AG04450 (cell line): ENCODE measurements at regions of chr11 and their contacts with region 1.

Region 1: DNA sequence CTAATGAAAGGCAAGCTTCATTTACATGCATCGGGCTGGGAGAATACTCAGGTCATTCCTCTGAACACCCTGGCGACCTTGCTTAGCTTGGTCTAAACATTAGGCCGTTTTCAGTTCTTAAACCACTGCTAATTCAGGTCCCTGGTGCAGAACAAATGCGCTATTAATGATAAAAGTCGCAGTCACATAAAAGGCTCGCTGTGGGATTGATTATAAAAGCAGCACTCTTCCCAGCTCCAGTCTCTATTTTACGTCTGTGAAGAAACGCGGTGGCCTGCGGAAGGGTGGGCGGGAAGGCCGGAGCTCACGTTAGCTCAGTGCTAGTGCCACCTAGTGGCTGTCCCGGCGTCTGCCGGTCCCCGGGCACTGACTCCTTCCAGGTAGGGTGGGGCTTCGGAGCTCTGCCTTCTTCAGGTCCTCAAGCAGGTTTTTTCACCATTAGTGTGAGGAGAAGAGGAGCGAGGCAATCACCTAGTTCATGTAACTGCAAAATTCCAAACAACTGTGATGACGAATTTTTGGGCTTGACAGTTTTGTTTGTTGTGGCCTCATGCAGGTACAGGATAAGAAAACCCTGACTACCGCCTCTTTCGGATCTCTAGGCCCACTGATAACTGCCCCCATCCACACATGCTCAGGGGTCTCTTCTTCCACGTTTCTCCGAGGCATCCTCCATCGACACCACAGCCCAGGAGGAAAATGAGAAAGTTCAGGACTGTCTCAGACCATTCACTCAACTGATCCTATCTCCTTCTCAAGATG is 66.5 kb upstream of the CLMP start:
- DNase-seq: no peak
- H3K4me3 ChIP-seq: peak overlapping the region; percentile 20
- H3K27ac ChIP-seq: no peak overlapping the region
- H3K27me3 ChIP-seq: peaks cover 9% of the 10 kb centered on the region
- CTCF ChIP-seq: peak; percentile 97

Region 2: DNA sequence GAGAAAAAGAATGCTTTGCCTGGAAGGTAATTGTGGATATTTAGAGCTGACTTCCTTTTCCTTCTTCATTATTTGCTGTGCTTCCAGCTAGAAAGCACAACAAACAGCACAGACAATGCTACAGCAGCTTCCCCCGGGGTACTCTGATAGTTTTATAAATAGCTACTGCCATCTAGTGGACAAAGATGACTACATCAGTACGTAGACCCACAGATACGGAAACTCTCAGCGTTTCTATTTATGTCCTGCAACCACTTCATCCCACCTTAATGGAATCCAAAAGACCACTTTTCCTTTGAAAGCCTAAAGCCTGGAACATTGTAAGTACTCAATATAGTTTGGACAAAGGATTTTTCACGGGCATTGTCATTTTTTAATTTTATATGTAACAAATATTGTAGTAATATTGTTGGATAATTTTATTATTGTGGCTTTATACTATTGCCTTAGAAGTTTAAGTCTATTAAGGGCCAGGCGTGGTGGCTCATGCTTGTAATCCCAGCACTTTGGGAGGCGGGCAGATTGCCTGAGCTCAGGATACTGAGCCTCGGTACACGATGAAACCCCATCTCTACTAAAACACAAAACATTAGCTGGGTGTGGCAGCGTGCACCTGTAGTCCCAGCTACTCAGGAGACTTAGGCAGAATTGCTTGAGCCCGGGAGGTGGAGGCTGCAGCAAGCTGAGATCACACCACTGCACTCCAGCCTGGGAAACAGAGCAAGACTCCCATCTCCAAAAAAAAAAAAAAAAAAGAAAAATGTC is 207.0 kb before region 1 on chr11:
- CTCF ChIA-PET with region 1: interaction called, 24 read pairs
- POLR2A ChIA-PET with region 1: interaction called, 3 read pairs
- DNase-seq: peak; percentile 39
- H3K4me3 ChIP-seq: no peak overlapping the region
- H3K27ac ChIP-seq: no peak overlapping the region
- H3K27me3 ChIP-seq: no peaks in the 10 kb centered on the region
- CTCF ChIP-seq: peak; percentile 74

Region 3: DNA sequence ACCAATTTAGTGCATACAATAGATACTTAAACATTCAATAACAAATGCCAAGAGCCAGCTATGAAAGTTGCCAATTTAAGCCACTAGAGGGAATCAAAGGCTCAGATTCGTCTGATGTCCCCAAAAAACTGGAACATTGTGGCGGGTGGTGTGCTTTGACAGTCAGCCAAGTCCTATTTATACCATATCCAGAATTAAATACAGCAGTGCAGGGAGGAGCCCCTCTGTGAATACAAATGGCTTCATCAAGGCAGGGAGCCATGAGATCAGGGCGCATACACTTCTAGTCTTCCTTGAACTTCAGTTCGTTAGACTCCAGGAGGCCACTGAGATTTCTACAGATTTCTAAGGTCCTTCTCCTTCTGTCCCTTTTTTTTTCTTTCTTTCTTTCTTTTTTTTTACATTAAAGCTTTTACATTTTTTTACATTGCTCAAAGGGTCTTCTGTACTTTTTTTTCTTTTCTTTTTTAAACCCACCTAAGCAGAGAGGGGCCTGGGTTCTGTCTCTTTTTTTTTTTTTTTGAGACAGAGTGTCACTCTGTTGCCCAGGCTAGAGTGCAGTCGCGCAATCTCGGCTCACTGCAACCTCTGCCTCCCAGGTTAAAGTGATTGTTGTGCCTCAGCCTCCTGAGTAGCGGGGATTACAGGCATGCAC is 158.1 kb before region 1 on chr11:
- CTCF ChIA-PET with region 1: interaction called, 134 read pairs
- POLR2A ChIA-PET with region 1: no interaction called
- DNase-seq: peak; percentile 34
- H3K4me3 ChIP-seq: no peak overlapping the region
- H3K27ac ChIP-seq: no peak overlapping the region
- H3K27me3 ChIP-seq: no peaks in the 10 kb centered on the region
- CTCF ChIP-seq: peak; percentile 64

Region 4: GRCh38 chr11:123137431-123138224 is 123.9 kb before region 1 on chr11:
- CTCF ChIA-PET with region 1: interaction called, 11 read pairs
- POLR2A ChIA-PET with region 1: no interaction called
- DNase-seq: no peak
- H3K4me3 ChIP-seq: no peak overlapping the region; the same call in 1 of the 2 replicates
- H3K27ac ChIP-seq: peak overlapping the region; percentile 90
- H3K27me3 ChIP-seq: no peaks in the 10 kb centered on the region
- CTCF ChIP-seq: peak; percentile 33

Region 5: GRCh38 chr11:123235117-123235655 is 26.3 kb before region 1 on chr11:
- CTCF ChIA-PET with region 1: interaction called, 11 read pairs
- POLR2A ChIA-PET with region 1: no interaction called
- DNase-seq: no peak
- H3K4me3 ChIP-seq: no peak overlapping the region
- H3K27ac ChIP-seq: peak overlapping the region; percentile 48
- H3K27me3 ChIP-seq: no peaks in the 10 kb centered on the region
- CTCF ChIP-seq: peak; percentile 52